OCI-LY7 (cell line): ENCODE measurements at regions of chr22 and their contacts with region 1.

Region 1: DNA sequence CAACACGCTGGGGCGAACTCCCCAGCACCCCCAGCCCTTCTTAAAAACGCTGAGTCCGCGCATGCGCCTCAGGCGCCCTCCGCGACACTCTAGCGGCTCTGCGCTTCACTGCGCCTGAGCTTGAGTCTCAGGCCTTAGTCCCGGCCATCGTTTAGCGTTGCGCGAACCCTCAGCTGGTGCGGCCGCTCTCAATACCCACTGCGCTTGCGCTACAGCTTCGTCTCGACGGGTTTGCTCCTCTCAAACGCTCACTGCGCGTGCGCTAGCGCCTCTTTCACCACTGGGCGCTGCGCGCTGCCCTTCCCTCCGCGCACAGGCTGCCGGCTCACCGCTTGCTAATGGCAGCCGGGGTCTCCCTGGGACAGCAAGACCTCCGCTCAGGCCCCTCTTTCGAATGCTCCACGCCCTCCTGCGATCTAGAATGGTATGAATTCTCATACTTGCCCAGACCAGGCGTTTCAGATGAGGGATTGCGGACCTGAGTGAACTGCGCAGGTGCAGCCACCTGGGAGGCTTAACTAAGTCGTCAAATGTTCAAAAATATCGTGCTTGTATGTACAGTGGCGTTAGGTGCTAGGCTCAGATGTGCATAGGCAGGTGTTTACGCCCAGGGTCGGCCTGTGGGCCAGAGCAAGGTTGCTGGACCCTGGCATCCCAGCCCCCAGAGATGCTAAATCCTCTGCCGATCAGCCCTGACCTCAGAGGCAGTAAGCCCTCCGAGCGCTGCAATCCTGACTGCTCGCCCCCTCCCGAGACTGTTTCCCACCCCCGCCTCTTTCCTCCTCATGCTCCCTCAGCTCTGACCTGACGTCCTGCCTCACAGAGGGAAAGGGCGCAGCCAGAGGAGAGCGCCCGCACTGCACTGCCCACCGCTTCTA is at the start of gene SLC2A11:
- DNase-seq: peak; percentile 100
- H3K4me3 ChIP-seq: peak within 1 kb of the TSS; percentile 78
- H3K27ac ChIP-seq: peak within 1 kb of the TSS; percentile 94
- H3K4me1 ChIP-seq: peaks cover 21% of the 10 kb centered on the region
- CTCF ChIP-seq: peak; percentile 59
- total RNA-seq, gene SLC2A11: 16.0 and 16.4 TPM in 2 replicates

Region 2: DNA sequence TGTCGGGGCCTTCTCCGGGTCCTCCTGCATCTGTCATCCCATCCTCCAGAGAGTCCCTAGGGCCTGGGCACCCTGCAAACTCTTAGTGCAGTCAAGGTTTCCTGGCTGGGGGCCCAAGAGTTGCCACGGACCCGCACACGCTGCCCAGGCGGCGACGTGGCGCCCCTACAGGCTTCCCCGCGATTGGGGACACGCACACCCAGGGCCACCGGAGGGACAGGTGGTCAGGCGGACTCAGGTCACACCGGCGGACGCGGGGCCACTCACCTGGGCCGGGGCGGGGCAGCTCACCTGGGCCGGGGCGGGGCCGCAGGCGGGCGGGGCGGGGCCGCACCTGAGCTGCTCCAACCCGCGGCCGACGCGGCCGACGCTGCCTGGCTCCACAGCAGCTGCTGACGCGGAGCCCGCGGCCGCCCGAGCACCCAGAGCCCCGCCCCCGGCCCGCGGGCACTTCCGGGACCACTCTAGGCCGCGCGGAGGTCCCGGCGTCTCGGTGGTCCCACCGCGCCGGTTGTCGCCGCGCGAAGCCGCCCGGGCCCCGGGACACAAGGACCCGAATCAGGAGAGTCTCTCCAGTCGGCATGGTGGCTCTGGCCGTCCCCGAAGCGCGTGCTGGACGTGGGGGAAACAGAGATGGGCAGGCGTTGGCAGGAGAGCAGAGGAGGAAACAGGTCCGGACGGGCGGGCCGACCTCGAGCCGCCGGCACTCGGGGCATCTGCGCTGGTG is 107.0 kb before region 1 on chr22 and contains the start of gene ZNF70:
- CTCF ChIA-PET with region 1: no interaction called
- POLR2A ChIA-PET with region 1: interaction called, 10 read pairs
- intact Hi-C with region 1: no loop called
- DNase-seq: peak; percentile 94
- H3K4me3 ChIP-seq: peak within 1 kb of the TSS; percentile 78
- H3K27ac ChIP-seq: peak within 1 kb of the TSS; percentile 95
- H3K4me1 ChIP-seq: peaks cover 40% of the 10 kb centered on the region
- CTCF ChIP-seq: peak; percentile 50
- total RNA-seq, gene ZNF70: 5.1 and 6.0 TPM in 2 replicates

Region 3: DNA sequence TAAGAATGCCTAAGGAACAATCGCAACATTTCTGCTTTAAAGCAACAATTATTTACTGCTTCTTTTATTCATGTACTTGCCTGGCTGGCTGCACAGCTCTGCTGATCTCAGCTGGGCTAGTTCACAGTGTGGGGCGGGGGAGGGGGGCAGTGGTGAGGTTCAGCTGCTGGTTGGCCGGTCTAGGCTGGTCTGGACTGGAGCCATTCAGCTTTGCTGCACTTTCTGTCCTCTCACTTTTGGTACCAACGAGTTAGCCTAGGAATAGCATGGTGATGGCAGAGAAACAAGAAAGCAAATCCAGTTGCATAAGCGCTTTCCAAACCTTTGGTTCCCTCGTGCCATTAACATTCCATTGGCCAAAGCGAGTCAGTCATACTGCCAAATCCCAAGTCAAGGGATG is 20.4 kb after region 1 on chr22:
- CTCF ChIA-PET with region 1: no interaction called
- POLR2A ChIA-PET with region 1: interaction called, 12 read pairs
- intact Hi-C with region 1: no loop called
- DNase-seq: no peak
- H3K4me3 ChIP-seq: no peak overlapping the region
- H3K27ac ChIP-seq: no peak overlapping the region
- H3K4me1 ChIP-seq: peaks cover 10% of the 10 kb centered on the region
- CTCF ChIP-seq: no peak

Region 4: GRCh38 chr22:23893943-23894709 is 36.3 kb after region 1 on chr22 and contains the start of gene MIF:
- CTCF ChIA-PET with region 1: interaction called, 10 read pairs
- POLR2A ChIA-PET with region 1: interaction called, 16 read pairs
- intact Hi-C with region 1: loop called (anchors 1 kb)
- DNase-seq: peak; percentile 98
- H3K4me3 ChIP-seq: peak within 1 kb of the TSS; percentile 87
- H3K27ac ChIP-seq: peak within 1 kb of the TSS; percentile 90
- H3K4me1 ChIP-seq: peaks cover 25% of the 10 kb centered on the region
- CTCF ChIP-seq: peak; percentile 92
- total RNA-seq, gene MIF: 861 and 1,440 TPM in 2 replicates

Region 5: GRCh38 chr22:23913661-23914353 is 56.0 kb after region 1 on chr22:
- CTCF ChIA-PET with region 1: no interaction called
- POLR2A ChIA-PET with region 1: interaction called, 26 read pairs
- intact Hi-C with region 1: no loop called
- DNase-seq: peak; percentile 99
- H3K4me3 ChIP-seq: peak overlapping the region; percentile 74
- H3K27ac ChIP-seq: peak overlapping the region; percentile 85
- H3K4me1 ChIP-seq: peaks cover 63% of the 10 kb centered on the region
- CTCF ChIP-seq: no peak

Region 6: DNA sequence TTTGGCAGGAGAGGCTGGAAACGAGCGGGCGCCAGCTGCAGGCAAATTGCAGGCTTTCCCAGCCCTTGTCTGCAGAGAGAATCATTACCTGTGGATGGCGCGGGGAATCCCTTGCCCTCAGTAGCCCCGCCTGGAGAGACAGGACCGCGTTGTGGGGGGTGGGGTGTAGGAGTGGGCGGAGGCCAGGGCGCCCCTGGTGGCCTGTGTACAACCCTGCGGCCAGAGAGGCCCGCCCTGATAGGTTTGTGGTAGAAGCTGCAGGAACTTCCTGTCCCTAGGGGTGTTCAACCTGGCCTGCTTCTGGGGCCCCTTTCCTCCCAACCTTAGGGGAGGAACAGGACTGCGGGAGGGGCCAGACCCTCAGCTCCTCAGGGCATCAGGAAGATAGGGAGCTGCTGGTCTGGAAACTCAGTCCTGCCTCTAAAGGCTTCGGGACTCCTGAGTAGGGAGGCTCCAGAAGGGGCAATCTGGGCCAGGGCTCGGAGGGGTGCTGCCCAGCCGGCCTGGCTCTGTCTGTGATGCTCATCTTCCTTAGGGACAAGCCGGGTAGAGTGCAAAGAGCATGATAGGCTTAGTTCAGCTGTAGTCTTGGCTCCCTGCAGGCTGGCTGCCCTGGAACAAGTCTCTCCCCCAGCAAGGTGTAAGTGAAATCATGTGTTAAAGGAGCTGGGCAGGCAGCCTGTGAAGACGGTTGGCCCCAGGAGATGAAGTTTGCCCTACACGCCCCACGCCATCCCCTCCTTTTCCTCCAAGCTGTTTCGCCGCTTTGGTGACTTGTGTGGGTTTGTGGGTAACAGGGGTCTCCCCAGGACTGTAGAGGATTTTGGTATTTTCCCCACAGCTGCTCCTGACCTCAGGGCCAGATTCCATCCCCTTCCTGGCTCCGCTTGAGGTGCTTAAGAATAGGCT is 299.3 kb after region 1 on chr22:
- CTCF ChIA-PET with region 1: no interaction called
- POLR2A ChIA-PET with region 1: no interaction called
- intact Hi-C with region 1: loop called (anchors 10 kb)
- DNase-seq: peak; percentile 96
- H3K4me3 ChIP-seq: peak overlapping the region; percentile 74
- H3K27ac ChIP-seq: peak overlapping the region; percentile 81
- H3K4me1 ChIP-seq: peaks cover 46% of the 10 kb centered on the region
- CTCF ChIP-seq: peak; percentile 90